Heart right ventricle (tissue), 16 donors: ENCODE measurements at regions of chr2 and their contacts with region 1.

Region 1: DNA sequence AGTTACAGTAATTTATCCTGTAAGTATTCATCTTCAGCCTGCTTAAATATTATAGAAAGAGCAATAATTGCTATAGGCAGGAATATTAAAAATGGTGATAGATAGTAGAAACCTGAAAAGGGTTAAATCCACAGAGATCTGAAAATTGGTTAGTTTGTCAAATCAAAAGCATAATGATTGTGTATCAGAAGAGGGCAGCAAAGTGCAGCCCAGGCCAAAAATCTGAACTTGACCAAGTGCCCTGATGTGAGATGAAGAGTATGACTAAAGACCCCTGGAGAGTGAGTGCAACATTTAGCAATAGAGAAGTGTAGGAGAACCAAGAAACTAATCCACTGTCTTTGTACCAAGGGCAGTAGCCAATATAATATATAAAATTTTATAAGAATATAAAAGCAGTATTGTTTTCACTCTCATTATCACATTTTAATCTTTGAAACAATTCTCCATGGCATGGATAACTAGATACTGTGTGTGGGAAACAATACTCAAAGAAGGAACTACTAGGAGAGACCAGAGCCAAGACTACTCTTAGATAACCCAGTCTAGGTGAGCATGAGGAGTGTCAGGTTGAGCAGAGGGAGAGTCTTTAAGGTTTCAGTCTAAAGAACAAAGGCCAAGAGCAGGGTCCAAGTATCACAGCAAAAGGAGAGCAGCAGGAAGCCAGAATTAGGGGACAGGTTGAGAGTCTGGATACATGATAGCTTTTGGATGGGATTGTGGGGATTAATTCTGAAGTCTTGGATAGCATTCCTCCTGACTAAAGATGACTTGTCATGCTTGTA is 148.7 kb downstream of the CALCRL start:
- DNase-seq: no peak
- ATAC-seq: no peak
- H3K4me3 ChIP-seq: no peak overlapping the region
- H3K27ac ChIP-seq: peak overlapping the region in 2 of 10 donors; percentile 13 to 33
- H3K4me1 ChIP-seq: peaks cover 0 to 35% (median 6%) of the 10 kb centered on the region in 9 donors
- H3K27me3 ChIP-seq: no peaks in the 10 kb centered on the region
- CTCF ChIP-seq: peak in 7 of 9 donors; percentile 32 to 65 (median 44)

Region 2: DNA sequence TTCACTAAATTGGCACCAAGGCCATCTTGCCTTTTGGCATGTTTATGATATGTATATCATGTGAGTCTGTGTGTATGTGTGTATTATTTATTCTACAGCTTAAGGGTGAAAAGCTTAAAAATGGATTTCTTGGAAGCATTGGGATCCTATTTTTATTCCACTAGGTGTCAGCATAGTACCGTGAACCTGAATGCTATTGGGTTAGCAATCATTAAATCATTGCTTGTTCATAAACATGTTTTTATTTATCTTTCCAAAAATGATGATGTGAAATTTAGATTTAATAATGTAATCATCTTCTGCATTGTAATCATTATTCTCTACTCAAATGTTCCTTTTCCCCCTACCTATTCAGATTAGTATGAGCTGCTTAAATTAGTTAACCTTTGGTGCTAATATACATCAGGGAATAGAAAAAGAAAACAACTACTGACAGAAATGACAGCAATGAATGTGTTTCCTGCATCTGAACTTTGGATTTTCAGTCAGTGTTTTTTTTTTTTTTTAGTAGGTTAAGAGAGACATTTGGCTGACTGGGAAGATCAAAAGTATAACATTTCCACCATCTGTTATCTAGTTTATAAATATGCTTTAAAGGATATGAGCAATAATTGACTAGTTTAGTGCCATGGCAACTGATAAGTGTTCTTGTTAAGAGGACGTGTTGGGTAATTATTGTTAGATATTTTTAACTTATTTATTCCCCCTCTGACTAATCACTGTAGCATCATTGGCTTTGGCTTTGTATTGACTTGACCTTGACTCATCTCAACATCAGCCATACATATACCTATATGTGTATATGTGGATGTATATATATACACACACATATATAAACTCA is 436.2 kb before region 1 on chr2:
- intact Hi-C with region 1: loop called in 4 of 10 experiments (anchors 10 kb)
- DNase-seq: no peak
- ATAC-seq: peak in 6 of 8 donors; percentile 44 to 75 (median 60)
- H3K4me3 ChIP-seq: no peak overlapping the region
- H3K27ac ChIP-seq: peak overlapping the region in 2 of 10 donors; percentile 22 to 59
- H3K4me1 ChIP-seq: peaks cover 0 to 13% (median 5%) of the 10 kb centered on the region in 9 donors
- H3K27me3 ChIP-seq: no peaks in the 10 kb centered on the region
- CTCF ChIP-seq: peak; percentile 64 to 90 (median 72)

Region 3: DNA sequence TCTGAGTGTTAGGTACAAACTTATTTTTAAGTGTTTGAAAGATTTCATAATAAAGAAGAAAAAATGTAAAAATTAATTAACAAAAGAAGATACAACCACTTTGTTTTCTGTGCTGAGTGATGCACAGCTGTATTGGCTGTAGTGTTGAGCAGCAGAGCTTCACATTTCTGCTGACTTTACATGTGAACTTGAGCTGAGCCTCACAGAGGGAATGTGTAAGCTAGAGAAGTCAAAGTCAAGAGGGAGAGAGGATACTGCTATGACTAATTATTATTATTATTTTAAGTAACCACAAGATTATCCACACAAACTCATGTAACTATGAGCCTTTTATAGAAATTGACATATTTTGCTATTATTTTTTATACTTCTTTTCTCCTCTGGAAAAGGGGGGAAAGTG is 291.2 kb before region 1 on chr2:
- intact Hi-C with region 1: no loop called
- DNase-seq: no peak
- ATAC-seq: no peak
- H3K4me3 ChIP-seq: no peak overlapping the region
- H3K27ac ChIP-seq: no peak overlapping the region
- H3K4me1 ChIP-seq: no peaks in the 10 kb centered on the region
- H3K27me3 ChIP-seq: no peaks in the 10 kb centered on the region
- CTCF ChIP-seq: no peak

Region 4: GRCh38 chr2:187442378-187442777 is 143.1 kb after region 1 on chr2:
- intact Hi-C with region 1: loop called in 2 of 10 experiments (anchors 5 to 10 kb)
- DNase-seq: no peak
- ATAC-seq: no peak
- H3K4me3 ChIP-seq: peak overlapping the region in 5 of 10 donors; percentile 7 to 59 (median 58)
- H3K27ac ChIP-seq: peak overlapping the region in 2 of 10 donors; percentile 15 to 27
- H3K4me1 ChIP-seq: peaks cover 0 to 45% (median 13%) of the 10 kb centered on the region in 9 donors
- H3K27me3 ChIP-seq: no peaks in the 10 kb centered on the region
- CTCF ChIP-seq: peak in 3 of 9 donors; percentile 27 to 49 (median 30)

Region 5: DNA sequence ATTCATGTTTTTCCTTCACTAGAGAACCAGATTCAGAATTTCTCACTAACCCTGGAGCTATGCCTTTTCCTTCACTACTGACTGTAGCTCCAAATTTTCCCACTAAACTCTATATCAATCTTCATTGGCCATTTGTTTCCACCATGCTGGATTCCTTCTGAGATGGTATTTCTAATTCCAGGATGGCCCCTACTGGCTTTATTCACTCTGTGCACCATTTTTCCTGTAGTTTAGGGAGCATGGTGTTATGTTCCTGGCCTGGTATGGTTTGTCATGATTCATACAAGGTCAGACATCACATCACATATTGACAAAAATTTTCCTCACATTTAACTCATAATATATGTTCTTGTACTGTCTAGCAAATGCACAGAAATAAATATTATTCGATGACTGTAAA is 484.1 kb after region 1 on chr2:
- intact Hi-C with region 1: no loop called
- DNase-seq: no peak
- ATAC-seq: no peak
- H3K4me3 ChIP-seq: no peak overlapping the region
- H3K27ac ChIP-seq: no peak overlapping the region
- H3K4me1 ChIP-seq: no peaks in the 10 kb centered on the region
- H3K27me3 ChIP-seq: no peaks in the 10 kb centered on the region
- CTCF ChIP-seq: no peak